Caco-2 (cell line): ENCODE measurements at regions of chr6 and their contacts with region 1.

Region 1: DNA sequence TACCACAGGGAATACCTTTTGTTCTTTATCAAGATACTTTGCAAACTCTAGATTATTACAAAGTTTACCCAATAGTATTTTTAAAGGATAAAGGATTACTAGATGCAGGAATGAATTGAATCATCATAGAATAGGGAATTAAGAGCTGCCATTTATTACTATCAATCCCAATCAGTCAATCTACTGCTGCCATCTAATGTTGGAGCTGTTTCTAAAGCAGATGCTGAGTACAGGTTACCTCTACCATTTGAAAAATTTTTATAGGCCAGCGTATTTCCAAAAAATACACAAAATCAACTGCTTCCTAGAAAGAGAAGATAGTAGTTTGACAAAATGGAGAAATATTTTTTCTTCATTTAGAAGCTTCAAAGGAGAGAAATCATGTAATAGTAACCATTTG is 520.4 kb downstream of the ADGRB3 start:
- DNase-seq: no peak
- H3K4me3 ChIP-seq: no peak overlapping the region
- H3K4me3 Mint-ChIP-seq: no peak overlapping the region
- H3K27ac Mint-ChIP-seq: no peak overlapping the region
- H3K4me1 ChIP-seq: no peaks in the 10 kb centered on the region
- H3K4me1 Mint-ChIP-seq: peaks cover 6% of the 10 kb centered on the region
- H3K27me3 ChIP-seq: no peaks in the 10 kb centered on the region
- H3K27me3 Mint-ChIP-seq: no peaks in the 10 kb centered on the region
- CTCF ChIP-seq: no peak

Region 2: GRCh38 chr6:68975064-68975463 is 180.4 kb before region 1 on chr6:
- CTCF ChIA-PET with region 1: interaction called, 5 read pairs
- POLR2A ChIA-PET with region 1: no interaction called
- intact Hi-C with region 1: loop called (anchors 1 kb)
- DNase-seq: peak; percentile 32 to 45
- H3K4me3 ChIP-seq: no peak overlapping the region
- H3K4me3 Mint-ChIP-seq: no peak overlapping the region
- H3K27ac Mint-ChIP-seq: no peak overlapping the region
- H3K4me1 ChIP-seq: no peaks in the 10 kb centered on the region; the same call in 1 of the 2 replicates
- H3K4me1 Mint-ChIP-seq: no peaks in the 10 kb centered on the region
- H3K27me3 ChIP-seq: no peaks in the 10 kb centered on the region
- H3K27me3 Mint-ChIP-seq: no peaks in the 10 kb centered on the region
- CTCF ChIP-seq: no peak